Naive thymus-derived CD4-positive, alpha-beta T cell (primary cell): ENCODE measurements at regions of chr20 and their contacts with region 1.

Region 1: GRCh38 chr20:13119583-13119982 is 101.5 kb upstream of the ISM1 start:
- DNase-seq: peak in 8 of 9 donors; percentile 6 to 76 (median 66)
- ATAC-seq: peak; percentile 82
- H3K4me3 ChIP-seq: no peak overlapping the region
- H3K4me3 Mint-ChIP-seq: no peak overlapping the region
- H3K27ac ChIP-seq: no peak overlapping the region
- H3K27ac Mint-ChIP-seq: no peak overlapping the region
- H3K4me1 ChIP-seq: no peaks in the 10 kb centered on the region
- H3K4me1 Mint-ChIP-seq: no peaks in the 10 kb centered on the region
- H3K27me3 ChIP-seq: no peaks in the 10 kb centered on the region
- H3K27me3 Mint-ChIP-seq: no peaks in the 10 kb centered on the region

Region 2: DNA sequence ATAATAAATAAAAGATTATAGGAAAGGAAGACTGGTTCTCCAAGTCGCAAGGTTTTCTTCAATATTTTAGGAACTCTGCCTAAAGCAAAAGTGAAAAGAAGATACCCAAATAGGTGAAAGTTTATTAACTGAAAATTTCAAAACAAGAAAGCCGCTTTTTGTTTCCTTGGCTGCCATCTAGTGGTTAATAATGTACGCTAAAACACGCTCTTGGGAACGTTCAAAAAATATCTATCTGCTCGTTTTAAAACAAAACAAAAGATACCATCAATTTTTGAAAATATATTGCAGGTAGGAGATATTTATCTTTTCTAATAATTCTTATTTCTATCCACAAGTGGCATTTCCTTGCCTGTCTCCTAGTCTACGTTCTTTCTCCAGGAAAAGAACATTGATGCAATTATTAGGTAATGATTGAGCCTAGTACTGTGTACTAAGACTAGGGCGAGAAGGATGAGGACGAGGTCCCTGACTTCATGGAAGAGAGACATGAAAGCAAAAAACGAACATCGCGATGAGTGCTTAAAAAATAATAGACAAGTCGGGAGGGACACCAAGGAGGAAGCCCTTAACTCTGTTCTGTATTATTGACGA is 13.6 kb before region 1 on chr20:
- CTCF ChIA-PET with region 1: interaction called, 11 read pairs
- POLR2A ChIA-PET with region 1: no interaction called
- intact Hi-C with region 1: no loop called
- DNase-seq: peak in 5 of 9 donors; percentile 10 to 34 (median 14)
- ATAC-seq: no peak
- H3K4me3 ChIP-seq: no peak overlapping the region
- H3K4me3 Mint-ChIP-seq: no peak overlapping the region
- H3K27ac ChIP-seq: no peak overlapping the region
- H3K27ac Mint-ChIP-seq: no peak overlapping the region
- H3K4me1 ChIP-seq: no peaks in the 10 kb centered on the region
- H3K4me1 Mint-ChIP-seq: no peaks in the 10 kb centered on the region
- H3K27me3 ChIP-seq: no peaks in the 10 kb centered on the region
- H3K27me3 Mint-ChIP-seq: peaks cover 0 to 6% (median 5%) of the 10 kb centered on the region in 5 donors

Region 3: DNA sequence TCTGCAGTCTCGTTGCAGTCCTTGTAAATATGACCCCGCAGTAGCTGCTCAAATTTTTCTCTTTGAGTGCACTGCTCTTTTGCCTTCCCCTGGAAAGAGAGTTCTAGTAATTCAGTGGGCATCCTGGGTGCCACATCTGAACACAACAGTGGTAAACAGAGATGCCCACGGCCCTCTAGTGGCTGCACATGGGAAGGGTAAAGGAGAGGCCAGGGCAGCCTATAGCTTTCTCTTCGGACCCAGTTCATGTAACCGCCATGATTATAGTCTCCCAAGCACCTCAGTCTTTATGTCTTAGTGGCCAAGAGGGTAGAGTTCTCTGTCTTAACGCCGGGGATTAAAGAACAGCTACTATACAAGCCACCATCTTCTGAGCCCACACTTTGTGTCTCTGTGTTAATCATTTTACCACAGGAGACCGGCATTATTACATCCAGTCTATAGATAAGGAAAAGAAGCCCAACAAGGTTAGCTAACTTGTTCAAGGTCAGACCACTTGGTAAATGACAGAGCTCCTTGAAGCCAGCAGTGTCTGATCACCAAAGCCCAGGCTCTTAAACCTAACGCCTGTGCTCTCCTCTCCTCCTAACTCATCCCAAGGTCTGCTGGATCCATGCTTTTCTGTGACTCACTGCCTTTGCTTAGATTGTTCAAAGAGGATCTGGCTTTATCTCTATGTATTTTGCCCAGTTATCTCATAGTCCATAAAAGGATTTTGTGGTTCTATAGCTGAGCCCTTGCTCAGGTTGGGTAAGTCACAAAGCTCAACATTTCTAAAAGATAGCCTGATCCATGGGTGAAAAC is 183.3 kb after region 1 on chr20:
- CTCF ChIA-PET with region 1: interaction called, 27 read pairs
- POLR2A ChIA-PET with region 1: no interaction called
- intact Hi-C with region 1: loop called (anchors 1 kb)
- DNase-seq: peak in 8 of 9 donors; percentile 10 to 51 (median 40)
- ATAC-seq: peak; percentile 72
- H3K4me3 ChIP-seq: no peak overlapping the region
- H3K4me3 Mint-ChIP-seq: no peak overlapping the region
- H3K27ac ChIP-seq: no peak overlapping the region
- H3K27ac Mint-ChIP-seq: no peak overlapping the region
- H3K4me1 ChIP-seq: no peaks in the 10 kb centered on the region
- H3K4me1 Mint-ChIP-seq: no peaks in the 10 kb centered on the region
- H3K27me3 ChIP-seq: no peaks in the 10 kb centered on the region
- H3K27me3 Mint-ChIP-seq: peaks cover 0 to 4% (median 0%) of the 10 kb centered on the region in 5 donors

Region 4: DNA sequence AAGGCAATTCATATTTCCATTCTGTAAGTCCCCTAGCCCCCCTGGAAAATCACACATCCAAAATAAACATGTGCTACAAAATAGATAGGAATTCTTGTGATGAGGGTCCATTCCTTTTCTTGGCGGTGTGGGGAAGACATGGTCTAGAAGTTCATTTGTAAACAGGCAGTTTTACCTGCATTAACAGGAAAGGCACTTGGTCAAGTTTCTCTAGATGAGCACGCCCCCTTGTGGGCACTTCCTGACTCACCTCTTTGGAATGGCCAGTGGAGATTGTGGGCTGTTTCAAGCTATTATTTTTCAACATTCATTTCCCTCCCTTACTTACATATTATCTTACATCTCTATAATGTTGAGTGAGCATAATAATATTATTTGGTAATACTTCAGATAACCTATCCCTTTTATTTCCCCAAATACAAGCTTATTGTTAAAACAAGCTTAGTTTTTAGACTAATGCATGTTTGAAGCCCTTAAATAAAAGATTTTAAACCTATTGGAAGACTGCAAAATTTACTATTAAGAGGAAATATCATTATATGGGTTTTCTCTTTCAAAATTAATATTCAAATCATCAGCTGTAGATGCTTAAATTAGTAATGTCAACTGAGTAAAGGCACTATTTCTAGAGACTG is 427.0 kb after region 1 on chr20:
- CTCF ChIA-PET with region 1: interaction called, 11 read pairs
- POLR2A ChIA-PET with region 1: no interaction called
- intact Hi-C with region 1: loop called in 1 of 2 experiments (anchors 1 kb)
- DNase-seq: peak; percentile 10 to 72 (median 44)
- ATAC-seq: peak; percentile 64
- H3K4me3 ChIP-seq: no peak overlapping the region
- H3K4me3 Mint-ChIP-seq: no peak overlapping the region
- H3K27ac ChIP-seq: no peak overlapping the region
- H3K27ac Mint-ChIP-seq: no peak overlapping the region
- H3K4me1 ChIP-seq: no peaks in the 10 kb centered on the region
- H3K4me1 Mint-ChIP-seq: peaks cover 0 to 4% (median 0%) of the 10 kb centered on the region in 7 donors
- H3K27me3 ChIP-seq: no peaks in the 10 kb centered on the region
- H3K27me3 Mint-ChIP-seq: no peaks in the 10 kb centered on the region